ENCODE measurements at regions of chr4 and their contacts with region 1.

Region 1: DNA sequence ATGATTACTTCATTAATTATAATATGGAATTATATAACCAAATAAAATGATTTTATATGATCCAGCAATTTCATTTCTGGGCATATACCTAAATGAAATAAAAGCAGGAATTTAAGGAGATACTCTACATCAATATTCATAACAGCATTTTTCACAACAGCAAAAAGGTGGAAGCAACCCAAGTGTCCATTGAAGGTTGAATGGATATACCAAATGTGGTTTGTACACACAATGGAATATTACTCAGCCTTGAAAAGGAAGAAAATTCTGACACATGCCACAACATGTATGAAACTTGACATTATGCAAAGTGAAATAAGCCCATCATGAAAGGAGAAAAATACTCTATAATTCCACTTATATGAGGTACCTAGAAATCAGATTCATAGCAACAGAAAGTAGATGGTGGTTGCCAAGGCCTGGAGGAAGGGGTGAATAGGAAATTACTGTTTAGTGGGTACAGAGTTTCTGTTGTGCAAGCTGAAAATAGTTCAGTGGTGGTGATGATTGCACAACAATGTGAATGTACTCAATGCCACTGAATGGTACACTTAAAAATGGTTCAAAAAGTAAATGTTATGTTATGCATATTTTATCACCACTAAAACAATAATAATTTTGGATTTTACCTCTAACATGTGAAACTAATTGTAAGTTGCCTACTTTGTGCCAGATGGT is 471.5 kb downstream of the SPRY1 start:
- DNase-seq: no peak
- H3K4me3 ChIP-seq: no peak overlapping the region
- H3K27ac ChIP-seq: no peak overlapping the region
- H3K27me3 ChIP-seq: no peaks in the 10 kb centered on the region
- CTCF ChIP-seq: no peak

Region 2: DNA sequence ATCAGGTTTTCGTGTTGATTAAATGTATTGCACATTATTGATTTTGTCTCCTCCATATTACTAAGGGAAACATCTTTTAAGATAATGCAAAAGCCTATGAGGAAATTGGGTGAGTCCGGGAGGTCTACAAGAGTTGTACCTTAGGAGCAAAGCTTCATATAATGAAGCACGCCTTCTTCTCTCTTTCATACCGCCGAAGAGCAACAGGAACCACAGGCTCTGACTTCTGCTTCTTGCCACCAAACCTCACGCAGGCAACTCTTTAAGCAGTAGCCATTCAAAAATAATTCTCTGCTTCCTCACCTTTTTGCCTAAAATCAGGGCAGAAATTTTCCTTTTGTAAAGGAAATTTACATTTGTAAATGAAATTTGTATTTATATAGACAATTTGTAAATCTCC is 331.8 kb before region 1 on chr4:
- CTCF ChIA-PET with region 1: interaction called, 10 read pairs
- POLR2A ChIA-PET with region 1: no interaction called
- DNase-seq: no peak
- H3K4me3 ChIP-seq: no peak overlapping the region
- H3K27ac ChIP-seq: no peak overlapping the region
- H3K27me3 ChIP-seq: no peaks in the 10 kb centered on the region
- CTCF ChIP-seq: no peak

Region 3: DNA sequence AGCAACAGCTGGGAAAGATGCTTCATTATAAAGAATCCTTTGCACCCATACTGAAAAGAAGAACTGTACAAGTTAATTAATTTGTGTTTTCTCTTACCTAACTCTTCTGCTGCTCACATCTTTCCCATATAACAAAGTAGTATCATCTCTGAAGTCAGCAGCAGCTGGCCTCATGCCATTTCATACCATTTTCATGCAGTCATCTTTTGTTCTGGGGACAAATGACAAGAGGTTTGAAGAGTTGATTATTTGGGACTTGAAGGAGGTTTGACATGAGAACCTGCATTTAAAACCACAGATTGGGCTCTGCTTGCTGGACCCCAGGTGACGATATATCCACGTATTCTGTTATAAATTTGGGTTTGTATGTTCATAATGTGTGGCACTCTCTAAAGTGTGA is 41.2 kb before region 1 on chr4:
- CTCF ChIA-PET with region 1: no interaction called
- POLR2A ChIA-PET with region 1: no interaction called
- DNase-seq: no peak
- H3K4me3 ChIP-seq: no peak overlapping the region
- H3K27ac ChIP-seq: no peak overlapping the region
- H3K27me3 ChIP-seq: no peaks in the 10 kb centered on the region
- CTCF ChIP-seq: no peak

Region 4: DNA sequence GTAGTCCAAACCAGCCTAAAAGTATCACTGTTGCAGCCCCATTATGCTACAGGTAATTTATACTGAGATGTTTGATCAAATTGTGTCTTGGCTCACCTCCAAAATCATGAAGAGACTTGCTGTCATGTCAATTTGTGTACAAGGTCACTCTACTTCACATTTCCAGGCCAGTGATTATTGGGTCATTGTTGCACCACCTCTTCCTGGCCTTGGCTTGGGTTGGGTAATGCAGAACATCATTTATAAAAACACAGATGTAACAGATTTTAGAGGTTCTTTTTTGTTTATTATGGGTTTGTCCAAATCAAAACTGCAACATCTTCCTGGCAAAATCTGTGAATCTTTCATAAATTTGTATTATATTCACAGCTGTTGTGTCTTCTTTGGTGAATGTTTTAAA is 385.0 kb after region 1 on chr4:
- CTCF ChIA-PET with region 1: no interaction called
- POLR2A ChIA-PET with region 1: no interaction called
- DNase-seq: no peak
- H3K4me3 ChIP-seq: no peak overlapping the region
- H3K27ac ChIP-seq: no peak overlapping the region
- H3K27me3 ChIP-seq: no peaks in the 10 kb centered on the region
- CTCF ChIP-seq: no peak